KBM-7 (cell line): ENCODE measurements at regions of chr10 and their contacts with region 1.

Region 1: DNA sequence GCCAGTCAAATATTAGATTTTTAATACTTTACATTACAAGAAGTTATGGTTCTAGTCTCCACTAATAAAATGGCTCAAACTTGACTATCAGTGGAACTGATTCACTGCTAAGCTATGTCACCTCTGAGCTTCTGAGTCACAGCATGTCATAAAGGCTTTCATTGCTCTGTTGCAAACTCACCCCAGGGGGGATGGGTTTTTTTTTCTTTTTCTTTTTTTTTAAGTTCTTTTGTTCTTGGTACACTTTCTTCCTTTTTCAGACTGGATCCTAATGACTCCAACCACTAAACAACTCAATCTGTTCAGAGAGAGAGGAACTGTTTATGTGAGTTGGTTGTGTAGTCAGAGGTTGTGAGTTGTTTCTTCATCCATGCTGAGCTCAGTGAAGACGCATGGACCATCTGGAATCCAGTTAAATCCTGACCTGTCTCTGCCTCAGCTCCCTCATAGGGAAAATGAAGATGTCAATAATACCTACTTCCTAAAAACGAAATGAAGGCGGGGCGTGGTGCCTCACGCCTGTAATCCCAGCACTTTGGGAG is 11.0 kb downstream of the MYOF start:
- DNase-seq: peak; percentile 32

Region 2: DNA sequence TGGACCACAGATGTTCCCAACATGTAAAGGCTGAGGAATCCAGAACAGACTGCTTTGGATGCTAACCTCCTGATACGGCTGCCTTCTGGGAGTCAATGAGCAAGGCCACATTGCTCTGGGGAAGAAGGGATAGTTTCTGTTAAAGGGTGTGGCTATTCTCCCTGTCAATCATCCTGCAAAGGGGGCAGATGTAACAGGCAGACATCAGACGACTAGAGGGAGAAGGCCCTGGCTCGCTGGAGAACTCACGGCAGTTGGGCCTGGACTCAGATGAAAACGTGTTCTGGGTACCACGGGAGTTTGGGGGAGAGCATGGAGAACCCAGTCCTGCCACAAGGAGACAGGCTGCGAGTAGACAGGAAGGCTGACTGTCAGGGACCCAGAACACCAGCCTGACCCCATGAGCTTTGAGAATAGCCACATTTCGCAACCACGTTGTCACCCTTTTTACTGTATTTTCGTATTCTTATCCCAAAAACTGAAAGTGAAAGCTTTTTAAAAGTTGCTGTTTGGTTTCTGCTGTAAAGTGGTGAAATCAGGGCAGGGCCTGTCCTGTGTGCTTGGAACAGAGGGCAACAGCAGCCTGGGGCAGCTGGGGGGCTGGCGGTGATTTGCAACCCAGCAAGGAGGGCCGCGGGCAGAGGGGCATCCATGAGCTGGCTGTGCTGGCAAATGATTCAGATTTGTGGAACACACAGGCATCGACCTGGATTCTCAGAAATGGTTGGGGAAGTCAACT is 84.4 kb before region 1 on chr10:
- in situ Hi-C with region 1: loop called (anchors 10 kb)
- DNase-seq: peak; percentile 32

Region 3: GRCh38 chr10:93873427-93874115 is 402.4 kb after region 1 on chr10:
- in situ Hi-C with region 1: no loop called
- DNase-seq: no peak